GM10248 (cell line): ENCODE measurements at regions of chr18 and their contacts with region 1.

Region 1: GRCh38 chr18:11654736-11655605 is 34.1 kb upstream of the GNAL start:
- DNase-seq: peak; percentile 72
- CTCF ChIP-seq: peak; percentile 63

Region 2: DNA sequence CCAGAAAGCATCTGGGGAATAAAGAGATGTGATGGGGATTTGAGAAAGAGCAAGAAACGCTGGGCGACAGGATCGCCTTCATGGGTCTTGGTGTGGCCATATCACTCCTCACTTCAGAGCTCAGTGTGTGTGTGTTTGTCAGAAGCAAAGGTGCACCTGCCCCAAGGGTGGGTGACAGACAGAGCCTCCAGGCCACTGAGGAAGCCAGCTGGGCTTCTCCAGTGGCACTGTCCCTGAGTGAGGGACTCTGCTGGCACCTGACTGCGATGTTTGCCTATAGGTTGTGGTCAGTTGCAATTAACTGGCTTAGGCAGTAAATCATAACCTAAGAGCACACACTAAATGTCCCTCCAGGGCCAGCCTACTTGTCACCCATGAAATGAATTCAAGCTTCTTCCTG is 10.6 kb after region 1 on chr18:
- CTCF ChIA-PET with region 1: interaction called, 30 read pairs
- POLR2A ChIA-PET with region 1: no interaction called
- DNase-seq: no peak
- CTCF ChIP-seq: no peak

Region 3: DNA sequence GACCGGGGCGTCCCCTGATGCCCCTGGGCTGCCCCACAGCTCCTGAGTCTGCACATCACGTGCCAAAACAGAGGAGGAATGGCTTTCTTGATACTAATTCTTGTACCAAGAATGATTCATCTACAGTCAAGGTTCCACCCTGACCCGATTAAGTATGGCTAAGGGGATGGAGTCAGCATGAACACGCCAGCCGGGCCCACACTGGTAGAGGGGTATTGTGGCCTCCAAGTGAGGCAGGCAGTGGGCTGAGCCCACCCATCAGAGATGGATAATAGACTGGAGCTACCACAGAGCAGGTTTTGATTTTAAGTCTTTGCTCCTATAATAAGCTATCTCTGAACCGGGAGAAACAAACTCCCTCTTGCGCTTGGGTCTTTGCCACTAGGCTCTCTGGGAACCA is 16.2 kb after region 1 on chr18:
- CTCF ChIA-PET with region 1: interaction called, 30 read pairs
- POLR2A ChIA-PET with region 1: no interaction called
- DNase-seq: no peak
- CTCF ChIP-seq: no peak

Region 4: GRCh38 chr18:11733031-11733430 is 78.1 kb after region 1 on chr18:
- CTCF ChIA-PET with region 1: interaction called, 14 read pairs
- POLR2A ChIA-PET with region 1: no interaction called
- DNase-seq: peak; percentile 82
- CTCF ChIP-seq: peak; percentile 88

Region 5: DNA sequence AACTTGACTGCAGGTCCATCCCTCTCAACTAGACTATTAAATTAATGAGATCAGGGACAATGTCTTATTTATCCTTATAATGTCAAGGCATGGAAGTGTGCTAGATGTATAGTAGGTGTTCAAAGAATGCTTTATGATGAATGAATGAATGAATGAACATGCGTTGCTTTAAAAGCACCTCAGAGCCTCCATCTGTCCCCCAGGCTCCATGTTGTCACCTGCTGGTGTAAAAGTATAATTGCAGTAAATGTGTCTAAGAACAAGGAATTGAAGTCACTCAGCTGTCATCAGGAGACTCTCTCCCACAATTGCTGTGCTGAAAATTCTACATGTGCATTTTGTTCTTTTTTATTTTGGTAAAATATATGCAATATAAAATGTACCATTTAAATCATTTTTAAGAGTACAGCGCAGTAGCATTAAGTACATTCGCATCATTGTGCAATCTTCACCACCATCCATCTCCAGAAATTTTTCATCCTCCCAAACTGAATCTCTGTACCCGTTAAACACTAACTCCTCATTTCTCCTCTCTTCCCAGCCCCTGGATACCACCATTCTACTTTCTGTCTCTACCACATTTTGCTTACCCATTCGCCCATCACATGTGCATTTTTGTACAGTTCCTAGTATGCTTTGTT is 86.7 kb after region 1 on chr18:
- CTCF ChIA-PET with region 1: interaction called, 23 read pairs
- POLR2A ChIA-PET with region 1: no interaction called
- DNase-seq: peak; percentile 46
- CTCF ChIP-seq: peak; percentile 29

Region 6: GRCh38 chr18:12038639-12039417 is 383.9 kb after region 1 on chr18:
- CTCF ChIA-PET with region 1: interaction called, 10 read pairs
- POLR2A ChIA-PET with region 1: no interaction called
- DNase-seq: peak; percentile 86
- CTCF ChIP-seq: peak; percentile 99